CD14-positive monocyte (primary cell): ENCODE measurements at regions of chr16 and their contacts with region 1.

Region 1: GRCh38 chr16:89700100-89700648 is 1.3 kb downstream of the SPATA2L start:
- DNase-seq: peak; percentile 98 to 99 (median 99)
- H3K4me3 ChIP-seq: peak overlapping the region; percentile 69 to 82 (median 75)
- H3K4me3 Mint-ChIP-seq: peak overlapping the region; percentile 78 to 85
- H3K27ac ChIP-seq: peak overlapping the region; percentile 50 to 69
- H3K27ac Mint-ChIP-seq: peak overlapping the region in 6 of 7 donors; percentile 74 to 92 (median 83)
- H3K4me1 ChIP-seq: peaks cover 20 to 32% of the 10 kb centered on the region in 2 donors
- H3K4me1 Mint-ChIP-seq: peaks cover 13% of the 10 kb centered on the region
- H3K27me3 ChIP-seq: no peaks in the 10 kb centered on the region
- H3K27me3 Mint-ChIP-seq: peaks cover 8 to 15% (median 11%) of the 10 kb centered on the region in 3 donors
- CTCF ChIP-seq: peak; percentile 87

Region 2: DNA sequence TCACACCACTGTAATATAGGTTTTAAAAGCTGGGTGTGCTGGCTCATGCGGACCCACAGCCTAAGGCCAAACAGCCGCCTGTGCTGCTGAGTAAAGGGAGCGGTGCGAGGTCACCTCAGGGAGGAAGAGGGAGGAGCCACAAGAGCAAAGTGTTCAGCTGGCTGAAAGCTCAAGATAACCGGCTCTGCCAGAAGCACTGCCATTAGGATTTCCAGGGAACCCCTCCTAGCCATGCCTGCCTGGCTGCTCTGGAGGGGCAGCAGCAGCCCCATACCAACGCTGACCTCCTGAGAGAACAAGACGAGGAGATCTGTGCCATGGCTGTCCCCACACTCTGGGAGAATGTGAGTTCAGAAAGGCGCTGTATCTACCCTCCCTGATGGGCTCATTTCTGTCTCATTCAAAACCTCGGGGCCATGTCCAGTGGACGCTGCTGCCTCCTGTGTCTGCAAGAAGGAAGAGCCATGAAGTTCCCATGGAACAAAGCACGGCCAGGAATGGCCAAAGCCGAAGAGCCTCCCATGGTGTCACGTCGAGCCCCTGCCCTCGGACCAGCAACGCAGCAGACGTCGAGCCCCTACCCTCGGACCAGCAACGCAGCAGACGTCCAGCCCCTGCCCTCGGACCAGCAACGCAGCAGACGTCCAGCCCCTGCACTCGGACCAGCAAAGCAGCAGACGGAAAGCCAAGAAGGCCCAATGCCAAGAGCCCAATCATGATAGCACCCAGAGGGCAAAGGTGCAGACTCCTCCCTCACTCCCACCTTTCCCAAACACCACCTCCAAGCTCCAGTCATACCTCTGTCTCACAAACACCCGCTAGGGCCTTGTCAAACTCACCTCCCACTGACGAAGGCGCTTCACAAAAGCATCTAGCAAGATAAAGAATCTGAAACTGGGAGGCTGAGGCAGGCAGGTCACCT is 316.8 kb before region 1 on chr16:
- intact Hi-C with region 1: no loop called
- DNase-seq: no peak
- H3K4me3 ChIP-seq: no peak overlapping the region
- H3K4me3 Mint-ChIP-seq: no peak overlapping the region
- H3K27ac ChIP-seq: peak overlapping the region; percentile 23 to 58
- H3K27ac Mint-ChIP-seq: peak overlapping the region; percentile 20 to 82 (median 61)
- H3K4me1 ChIP-seq: peaks cover 14 to 16% of the 10 kb centered on the region in 2 donors
- H3K4me1 Mint-ChIP-seq: peaks cover 42% of the 10 kb centered on the region
- H3K27me3 ChIP-seq: no peaks in the 10 kb centered on the region
- H3K27me3 Mint-ChIP-seq: peaks cover 0 to 4% (median 2%) of the 10 kb centered on the region in 3 donors
- CTCF ChIP-seq: no peak

Region 3: GRCh38 chr16:89720813-89721545 is 20.8 kb after region 1 on chr16 and contains the starts of genes VPS9D1 and ZNF276:
- intact Hi-C with region 1: loop called in 1 of 2 experiments (anchors 2 kb)
- DNase-seq: peak; percentile 61 to 64 (median 61)
- H3K4me3 ChIP-seq: peak within 1 kb of the TSS; percentile 51 to 97 (median 64)
- H3K4me3 Mint-ChIP-seq: peak within 1 kb of the TSS; percentile 91 to 94
- H3K27ac ChIP-seq: peak within 1 kb of the TSS; percentile 92
- H3K27ac Mint-ChIP-seq: peak within 1 kb of the TSS; percentile 96 to 99 (median 98)
- H3K4me1 ChIP-seq: peaks cover 45 to 57% of the 10 kb centered on the region in 2 donors
- H3K4me1 Mint-ChIP-seq: peaks cover 51% of the 10 kb centered on the region
- H3K27me3 ChIP-seq: no peaks in the 10 kb centered on the region
- H3K27me3 Mint-ChIP-seq: no peaks in the 10 kb centered on the region
- CTCF ChIP-seq: no peak
- polyA plus RNA-seq, gene VPS9D1: 1.2 to 29.7 (median 1.6) TPM
- polyA plus RNA-seq, gene ZNF276: 2.2 to 54.5 (median 3.2) TPM

Region 4: DNA sequence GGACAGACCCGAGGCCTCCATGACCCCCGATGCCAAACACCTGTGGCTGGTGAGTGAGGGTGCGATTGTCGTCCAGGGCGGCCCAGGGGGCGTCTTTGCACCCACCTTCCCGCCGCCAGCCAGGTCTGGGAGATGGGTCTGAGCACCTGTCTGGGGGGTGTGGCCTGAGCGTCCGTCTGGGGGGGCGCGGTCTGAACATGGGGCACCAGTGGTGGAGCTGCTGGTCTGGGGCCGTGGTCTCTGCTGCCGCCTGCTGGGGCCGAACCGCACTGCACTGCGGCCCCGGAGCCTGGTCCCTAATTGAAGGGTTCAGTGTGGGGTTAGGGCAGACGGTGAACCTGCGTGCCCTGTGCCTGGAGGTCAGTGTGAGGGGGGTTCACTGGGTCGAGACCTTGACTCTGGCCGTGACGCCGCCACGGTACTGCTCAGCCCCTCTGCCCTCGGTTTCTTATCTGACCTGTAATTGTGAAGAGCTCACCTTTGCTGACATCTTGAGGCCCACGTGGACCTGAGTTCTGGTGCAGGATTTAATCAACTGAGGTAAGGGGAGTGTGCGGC is 160.7 kb after region 1 on chr16:
- intact Hi-C with region 1: loop called in 1 of 2 experiments (anchors 2 kb)
- DNase-seq: peak; percentile 50 to 58 (median 58)
- H3K4me3 ChIP-seq: no peak overlapping the region
- H3K4me3 Mint-ChIP-seq: no peak overlapping the region
- H3K27ac ChIP-seq: no peak overlapping the region
- H3K27ac Mint-ChIP-seq: no peak overlapping the region
- H3K4me1 ChIP-seq: peaks cover 31 to 35% of the 10 kb centered on the region in 2 donors
- H3K4me1 Mint-ChIP-seq: peaks cover 33% of the 10 kb centered on the region
- H3K27me3 ChIP-seq: no peaks in the 10 kb centered on the region
- H3K27me3 Mint-ChIP-seq: peaks cover 6 to 12% (median 10%) of the 10 kb centered on the region in 3 donors
- CTCF ChIP-seq: peak; percentile 97

Region 5: GRCh38 chr16:89873972-89874689 is 174.0 kb after region 1 on chr16:
- intact Hi-C with region 1: loop called in 1 of 2 experiments (anchors 5 kb)
- DNase-seq: peak; percentile 92 to 98 (median 97)
- H3K4me3 ChIP-seq: peak overlapping the region; percentile 87 to 97 (median 95)
- H3K4me3 Mint-ChIP-seq: peak overlapping the region; percentile 86 to 93
- H3K27ac ChIP-seq: peak overlapping the region; percentile 99 to 100
- H3K27ac Mint-ChIP-seq: peak overlapping the region; percentile 98 to 99 (median 99)
- H3K4me1 ChIP-seq: peaks cover 18 to 22% of the 10 kb centered on the region in 2 donors
- H3K4me1 Mint-ChIP-seq: peaks cover 15% of the 10 kb centered on the region
- H3K27me3 ChIP-seq: no peaks in the 10 kb centered on the region
- H3K27me3 Mint-ChIP-seq: peaks cover 0 to 3% (median 1%) of the 10 kb centered on the region in 3 donors
- CTCF ChIP-seq: no peak